ENCODE measurements at regions of chr22 and their contacts with region 1.

Region 1: DNA sequence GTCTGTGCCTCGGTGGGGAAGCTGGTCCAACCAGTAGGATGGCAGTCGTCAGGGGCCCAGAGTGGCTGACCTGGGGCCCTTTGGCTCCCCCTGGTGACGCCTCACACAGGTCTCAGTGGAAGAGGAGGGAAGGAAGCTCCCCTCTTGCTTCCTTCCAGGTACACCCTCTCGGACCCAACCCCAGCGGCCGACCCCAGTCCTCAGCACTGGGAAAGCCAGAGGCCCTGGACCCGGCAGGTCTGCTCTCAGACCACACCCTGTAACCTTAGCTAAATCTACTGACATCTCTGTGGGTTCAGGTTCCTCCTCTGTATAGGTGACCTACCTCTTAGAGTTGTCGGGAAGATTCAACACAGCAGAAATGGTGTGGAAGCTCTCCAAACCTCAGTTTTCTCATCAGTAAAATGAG is 3.4 kb upstream of the SCUBE1 start:
- DNase-seq: peak; percentile 91
- H3K4me3 Mint-ChIP-seq: no peak overlapping the region
- H3K27ac Mint-ChIP-seq: no peak overlapping the region
- H3K4me1 Mint-ChIP-seq: peaks cover 12% of the 10 kb centered on the region
- H3K27me3 Mint-ChIP-seq: peaks cover 22% of the 10 kb centered on the region

Region 2: DNA sequence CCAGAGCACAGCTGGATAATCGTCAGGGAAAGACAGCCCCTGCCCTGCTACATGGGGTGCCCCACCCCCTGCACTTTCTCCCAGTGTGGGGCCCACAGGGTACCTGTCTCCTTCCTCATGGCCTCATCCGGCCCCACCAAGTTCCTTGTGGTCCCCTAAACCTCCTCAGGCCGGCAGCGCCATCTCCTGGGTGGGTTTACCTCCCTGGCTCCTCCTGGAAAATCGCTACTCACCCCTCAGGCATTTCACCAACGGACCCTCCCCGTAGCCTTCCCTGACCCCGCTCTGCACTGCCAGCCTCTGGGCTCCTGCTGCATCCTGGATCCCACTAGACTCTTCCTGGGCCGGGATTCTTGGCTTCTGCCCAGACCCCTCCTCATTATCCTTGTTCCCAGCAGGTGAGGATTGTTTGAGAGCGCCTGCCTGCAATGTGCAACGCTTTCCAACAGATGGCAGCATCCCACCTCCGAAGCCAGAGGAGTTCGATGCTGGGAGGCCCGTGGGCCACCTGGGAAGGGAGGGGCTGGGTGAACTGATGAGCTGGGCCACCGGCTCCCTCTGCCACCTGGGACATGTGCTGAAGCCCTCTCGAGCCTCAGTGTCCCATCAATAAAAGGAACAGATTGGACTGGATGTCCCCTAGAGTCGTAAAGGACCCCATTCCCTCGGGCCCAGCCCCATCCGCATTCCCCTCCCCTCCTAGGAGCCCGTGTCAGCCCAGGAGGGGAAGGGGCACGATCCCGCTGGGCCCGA is 115.4 kb before region 1 on chr22:
- intact Hi-C with region 1: loop called (anchors 1 kb)
- DNase-seq: peak; percentile 92
- H3K4me3 Mint-ChIP-seq: no peak overlapping the region
- H3K27ac Mint-ChIP-seq: peak overlapping the region; percentile 53
- H3K4me1 Mint-ChIP-seq: peaks cover 7% of the 10 kb centered on the region
- H3K27me3 Mint-ChIP-seq: no peaks in the 10 kb centered on the region

Region 3: GRCh38 chr22:43273902-43274484 is 72.5 kb before region 1 on chr22:
- intact Hi-C with region 1: loop called (anchors 1 kb)
- DNase-seq: peak; percentile 82
- H3K4me3 Mint-ChIP-seq: no peak overlapping the region
- H3K27ac Mint-ChIP-seq: no peak overlapping the region
- H3K4me1 Mint-ChIP-seq: peaks cover 14% of the 10 kb centered on the region
- H3K27me3 Mint-ChIP-seq: peaks cover 2% of the 10 kb centered on the region

Region 4: GRCh38 chr22:43467216-43467940 is 120.9 kb after region 1 on chr22:
- intact Hi-C with region 1: no loop called
- DNase-seq: no peak
- H3K4me3 Mint-ChIP-seq: no peak overlapping the region
- H3K27ac Mint-ChIP-seq: no peak overlapping the region
- H3K4me1 Mint-ChIP-seq: no peaks in the 10 kb centered on the region
- H3K27me3 Mint-ChIP-seq: peaks cover 2% of the 10 kb centered on the region

Measured in activated CD4-positive, alpha-beta T cell treated with anti-CD3 and anti-CD28 coated beads, Interleukin-2, amount 10 ng/mL, durations not matched to agents 24 days and 14 days (primary cell).